Gastrocnemius medialis (tissue), 4 donors: ENCODE measurements at regions of chr19 and their contacts with region 1.

Region 1: GRCh38 chr19:6530386-6531161 is at the start of gene TNFSF9:
- DNase-seq: peak; percentile 82 to 85
- ATAC-seq: peak; percentile 95
- H3K4me3 ChIP-seq: peak within 1 kb of the TSS; percentile 67 to 75 (median 74)
- H3K27ac ChIP-seq: peak within 1 kb of the TSS; percentile 74 to 90 (median 86)
- H3K4me1 ChIP-seq: peaks cover 25 to 29% of the 10 kb centered on the region in 2 donors
- H3K27me3 ChIP-seq: peaks cover 8 to 23% (median 10%) of the 10 kb centered on the region in 3 donors
- CTCF ChIP-seq: no peak
- POLR2A ChIP-seq: peak; percentile 82 to 92
- total RNA-seq, gene TNFSF9: 1.1 to 1.8 TPM in 2 of 4 donors, not detected in the others

Region 2: DNA sequence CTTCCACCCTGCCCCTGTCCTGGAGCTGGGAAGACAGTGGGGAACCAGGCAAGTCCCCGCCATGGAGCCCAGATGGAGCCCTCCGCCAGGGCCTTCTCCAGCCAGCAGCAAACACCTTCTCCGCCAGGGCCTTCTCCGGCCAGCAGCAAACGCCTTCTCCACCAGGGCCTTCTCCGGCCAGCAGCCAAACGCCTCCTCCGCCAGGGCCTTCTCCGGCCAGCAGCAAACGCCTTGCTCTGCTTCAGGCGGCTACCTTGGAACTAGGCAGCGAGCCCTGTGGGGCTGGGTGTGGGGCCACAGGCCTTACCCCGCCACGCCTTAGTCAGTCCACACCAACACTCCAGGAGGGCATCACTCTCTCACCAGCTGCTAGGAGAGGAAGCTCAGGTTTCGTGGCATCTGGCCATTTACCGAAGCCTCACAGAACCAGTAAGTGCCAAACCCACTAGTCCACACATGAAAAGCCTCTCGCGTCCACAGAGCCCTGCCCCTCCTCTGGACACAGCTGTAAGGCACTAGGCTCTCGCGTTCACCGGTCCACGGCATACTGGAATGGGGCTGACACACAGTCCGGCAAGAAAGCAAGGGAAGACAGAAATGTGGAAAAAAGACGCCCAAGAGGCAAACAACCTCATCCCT is 291.8 kb before region 1 on chr19:
- in situ Hi-C with region 1: no loop called
- intact Hi-C with region 1: no loop called
- DNase-seq: peak; percentile 75 to 88
- ATAC-seq: peak; percentile 83 to 86
- H3K4me3 ChIP-seq: peak overlapping the region in 3 of 4 donors; percentile 4 to 23 (median 4)
- H3K27ac ChIP-seq: peak overlapping the region; percentile 83 to 92 (median 86)
- H3K4me1 ChIP-seq: peaks cover 73 to 81% of the 10 kb centered on the region in 2 donors
- H3K27me3 ChIP-seq: no peaks in the 10 kb centered on the region
- CTCF ChIP-seq: peak in 2 of 5 experiments; percentile 9 to 13
- POLR2A ChIP-seq: no peak

Region 3: DNA sequence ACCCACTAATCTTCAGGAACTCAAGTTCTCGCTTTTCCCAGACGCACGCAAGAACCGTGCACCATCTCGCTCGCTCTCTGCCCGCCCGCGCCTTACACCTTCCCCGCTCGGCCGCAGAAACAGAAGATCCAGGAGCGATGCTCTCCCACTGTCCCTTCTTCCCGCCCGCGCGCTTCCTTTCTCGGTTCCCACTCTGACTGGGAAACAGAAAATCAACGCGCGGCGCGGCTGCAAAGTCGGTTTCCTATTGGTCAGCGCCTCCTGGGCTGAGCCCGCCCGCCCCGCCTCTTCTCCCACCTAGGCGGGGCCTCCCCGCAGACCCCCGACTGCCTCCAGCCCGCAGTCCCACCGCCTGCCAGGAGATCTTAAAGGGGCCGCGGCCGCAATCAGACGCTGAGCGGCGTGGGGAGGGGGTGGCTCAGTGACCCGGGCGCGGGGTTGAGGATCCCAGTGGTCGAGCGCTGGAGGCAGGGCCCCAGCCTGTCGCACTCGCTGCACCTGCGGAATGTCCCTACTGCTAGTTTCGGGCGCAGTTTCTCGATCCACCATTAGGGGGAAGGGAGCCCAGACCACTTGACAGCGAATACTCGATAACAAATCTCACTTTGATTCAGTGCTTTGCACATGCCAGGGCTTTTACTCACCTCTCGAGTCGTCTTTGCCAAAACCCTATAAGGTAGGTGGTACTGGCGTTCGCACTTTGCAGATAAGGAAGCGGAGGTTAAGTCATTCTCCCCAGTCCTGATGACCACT is 70.3 kb before region 1 on chr19:
- in situ Hi-C with region 1: no loop called
- intact Hi-C with region 1: loop called (anchors 5 kb)
- DNase-seq: peak; percentile 90 to 94
- ATAC-seq: peak; percentile 94 to 95
- H3K4me3 ChIP-seq: peak overlapping the region; percentile 64 to 82 (median 71)
- H3K27ac ChIP-seq: peak overlapping the region; percentile 78 to 81 (median 80)
- H3K4me1 ChIP-seq: peaks cover 5 to 14% of the 10 kb centered on the region in 2 donors
- H3K27me3 ChIP-seq: peaks cover 18 to 23% (median 21%) of the 10 kb centered on the region in 3 donors
- CTCF ChIP-seq: peak in 4 of 5 experiments; percentile 58 to 79 (median 74)
- POLR2A ChIP-seq: no peak

Region 4: DNA sequence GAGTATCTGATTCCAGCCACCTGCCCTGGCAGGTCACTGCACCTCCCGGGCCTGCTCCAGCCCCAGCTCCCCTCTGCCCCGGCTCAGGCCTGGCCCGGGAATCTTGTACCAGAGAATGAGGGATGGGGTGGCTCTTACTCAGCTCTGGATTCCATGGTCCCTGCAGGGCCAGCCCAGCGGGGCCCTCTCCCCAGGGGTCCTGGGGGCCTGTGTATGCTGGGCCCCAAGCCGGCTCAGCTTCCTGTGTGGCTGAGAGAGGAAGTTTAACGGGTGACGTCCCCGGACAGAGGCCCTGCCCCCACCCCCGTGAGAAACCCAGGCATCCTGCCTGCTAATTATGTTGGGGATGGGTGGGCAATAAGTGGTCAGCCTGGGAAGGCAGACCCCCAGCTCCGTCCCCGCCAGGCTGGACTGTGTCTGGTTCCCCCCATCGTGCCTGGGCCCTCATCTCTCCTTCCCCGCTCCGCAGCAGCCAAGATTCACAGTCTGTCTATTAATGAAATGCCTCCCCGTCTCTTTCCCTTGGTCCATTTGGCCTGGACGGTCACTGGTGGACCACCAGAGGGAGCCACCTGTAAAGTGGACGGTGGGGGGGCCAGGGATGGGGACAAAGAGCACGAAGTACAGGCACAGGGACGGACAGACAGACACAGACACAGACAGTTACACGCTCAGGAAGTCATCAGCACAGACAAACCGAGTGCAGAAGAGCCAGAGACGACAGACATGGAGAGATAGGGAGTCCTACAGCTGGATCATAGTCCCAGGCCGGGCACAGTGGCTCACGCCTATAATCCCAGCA is 48.8 kb before region 1 on chr19 and contains the start of gene DENND1C:
- in situ Hi-C with region 1: no loop called
- intact Hi-C with region 1: no loop called
- DNase-seq: no peak
- ATAC-seq: no peak
- H3K4me3 ChIP-seq: peak within 1 kb of the TSS in 2 of 4 donors; percentile 13 to 28
- H3K27ac ChIP-seq: no peak within 1 kb of the TSS
- H3K4me1 ChIP-seq: no peaks in the 10 kb centered on the region
- H3K27me3 ChIP-seq: peaks cover 6 to 20% (median 20%) of the 10 kb centered on the region in 3 donors
- CTCF ChIP-seq: peak in 3 of 5 experiments; percentile 21 to 36 (median 26)
- POLR2A ChIP-seq: no peak
- total RNA-seq, gene DENND1C: 0.27 to 1.2 (median 0.29) TPM in 3 of 4 donors, not detected in the other

Region 5: DNA sequence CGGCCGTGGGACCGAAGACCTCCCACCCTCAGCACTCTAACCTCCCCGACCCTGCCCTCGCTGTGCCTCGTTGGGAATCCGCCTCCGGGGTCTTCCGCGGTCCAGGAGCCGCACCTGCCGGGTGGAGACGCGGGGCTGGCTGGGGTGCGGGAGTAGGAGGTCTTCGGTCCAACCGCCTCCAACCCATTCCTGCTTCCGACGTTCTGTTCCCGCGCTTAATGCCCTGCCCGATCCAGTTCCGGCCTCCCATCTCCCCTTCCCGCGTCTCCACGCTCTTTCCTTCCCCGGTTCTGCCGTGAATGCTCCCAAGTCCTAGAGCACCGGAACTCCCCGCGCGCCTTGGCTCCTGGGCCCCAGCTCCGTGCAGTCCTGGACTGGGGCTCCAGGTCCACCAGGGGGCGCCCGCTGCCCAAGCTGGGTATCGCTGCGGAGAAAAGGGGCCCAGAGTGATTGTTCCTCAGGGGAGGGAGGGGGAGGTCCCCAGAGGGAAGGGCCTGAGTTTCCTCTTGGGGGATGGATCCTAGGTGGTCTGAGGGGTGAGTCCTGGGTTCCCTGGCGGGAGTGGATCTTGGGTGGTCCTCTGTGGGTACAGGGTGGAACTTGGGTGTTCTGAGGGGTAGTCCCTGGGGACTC is 13.8 kb before region 1 on chr19:
- in situ Hi-C with region 1: no loop called
- intact Hi-C with region 1: loop called (anchors 2 kb)
- DNase-seq: peak; percentile 67 to 72
- ATAC-seq: peak; percentile 76 to 81
- H3K4me3 ChIP-seq: peak overlapping the region; percentile 63 to 82 (median 76)
- H3K27ac ChIP-seq: peak overlapping the region; percentile 64 to 82 (median 73)
- H3K4me1 ChIP-seq: peaks cover 0 to 2% of the 10 kb centered on the region in 2 donors
- H3K27me3 ChIP-seq: no peaks in the 10 kb centered on the region
- CTCF ChIP-seq: peak; percentile 74 to 97 (median 94)
- POLR2A ChIP-seq: no peak